Posterior cingulate gyrus (tissue), 11 donors: ENCODE measurements at regions of chr15 and their contacts with region 1.

Region 1: GRCh38 chr15:79339564-79340314 is 28.8 kb downstream of the TMED3 start:
- DNase-seq: peak in 3 of 10 donors; percentile 14 to 16 (median 15)

Region 2: DNA sequence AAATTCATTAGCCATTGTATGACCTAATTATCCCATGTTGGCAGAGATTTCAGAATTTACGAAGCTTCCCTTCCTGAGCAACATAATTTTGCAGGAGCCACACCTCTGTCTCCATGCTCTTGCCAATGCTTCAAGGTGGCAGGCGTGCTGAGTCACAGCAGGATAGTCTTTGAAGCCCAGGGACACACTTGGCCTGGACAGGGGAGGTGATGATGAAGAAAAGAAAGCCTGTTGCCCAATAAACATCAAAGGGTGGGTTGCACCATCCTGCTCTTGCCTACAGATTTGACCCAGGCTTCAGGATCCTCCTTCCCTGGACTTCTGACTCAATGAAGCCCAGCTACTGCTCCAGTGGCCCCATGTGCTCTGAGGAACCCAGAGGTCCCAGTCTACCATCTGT is 209.5 kb after region 1 on chr15:
- intact Hi-C with region 1: no loop called
- DNase-seq: no peak

Region 3: GRCh38 chr15:79989682-79990081 is 649.9 kb after region 1 on chr15:
- intact Hi-C with region 1: loop called (anchors 2 kb)
- DNase-seq: no peak